A549 (cell line): ENCODE measurements at regions of chr2 and their contacts with region 1.

Region 1: GRCh38 chr2:126971481-126972278 is 73.0 kb downstream of the TEX51 start:
- DNase-seq: peak; percentile 61 to 69
- ATAC-seq: peak; percentile 81 to 94
- H3K4me3 ChIP-seq: peak overlapping the region; percentile 49
- H3K27ac ChIP-seq: peak overlapping the region; percentile 63 to 78; a peak in 5 of 6 replicates
- H3K4me1 ChIP-seq: 0 out of 3 replicates have a peak, but pooled peaks cover 3% of the 10 kb centered on the region
- CTCF ChIP-seq: peak; percentile 75
- EP300 ChIP-seq: no peak
- POLR2A ChIP-seq: no peak
- RAD21 ChIP-seq: peak; percentile 87 to 89

Region 2: GRCh38 chr2:126986631-126987187 is 15.0 kb after region 1 on chr2:
- CTCF ChIA-PET with region 1: interaction called, 16 read pairs
- POLR2A ChIA-PET with region 1: no interaction called
- DNase-seq: no peak
- ATAC-seq: no peak
- H3K4me3 ChIP-seq: no peak overlapping the region
- H3K27ac ChIP-seq: no peak overlapping the region
- H3K4me1 ChIP-seq: no peaks in the 10 kb centered on the region
- CTCF ChIP-seq: no peak
- EP300 ChIP-seq: no peak
- POLR2A ChIP-seq: no peak
- RAD21 ChIP-seq: no peak

Region 3: DNA sequence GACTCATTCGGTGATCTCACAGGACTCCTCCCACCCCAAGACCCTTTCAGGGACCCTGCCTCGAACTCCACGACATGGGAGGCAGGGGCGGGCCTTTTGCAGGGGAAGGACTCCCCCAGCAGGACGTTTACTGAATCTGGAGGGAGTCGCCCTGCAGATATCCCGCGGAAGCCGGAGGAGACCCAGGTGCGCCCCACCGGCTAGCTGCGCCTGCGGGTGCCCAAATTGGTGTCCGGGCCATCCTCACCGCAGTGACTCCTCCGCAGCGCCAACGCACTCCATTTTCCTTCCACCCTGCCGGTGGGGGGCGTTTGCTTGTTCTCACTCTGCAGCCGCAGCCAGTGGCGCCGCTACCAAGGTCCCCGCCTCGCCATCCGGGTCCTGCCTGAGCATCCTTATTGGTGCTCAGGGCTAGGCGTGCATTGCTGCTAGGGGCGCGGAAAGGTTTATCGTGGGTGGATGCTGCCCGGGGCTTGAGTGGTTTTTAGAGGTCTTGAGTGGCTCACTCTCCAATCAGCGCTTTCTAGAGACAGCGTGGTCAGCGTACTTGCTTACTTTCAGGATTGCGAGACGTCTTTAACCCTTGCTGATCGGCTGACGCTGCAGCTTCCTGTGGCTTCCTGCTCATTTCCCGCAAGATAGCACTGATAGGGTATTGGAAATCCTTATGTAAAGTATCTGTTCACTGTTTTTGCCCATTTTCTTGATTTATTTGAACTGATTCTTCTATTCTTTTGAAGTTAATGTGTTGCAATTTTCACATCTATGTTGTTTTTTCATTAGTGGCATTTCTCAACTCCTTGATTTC is 53.9 kb after region 1 on chr2:
- CTCF ChIA-PET with region 1: interaction called, 13 read pairs
- POLR2A ChIA-PET with region 1: no interaction called
- DNase-seq: peak; percentile 82 to 90
- ATAC-seq: peak; percentile 94 to 98
- H3K4me3 ChIP-seq: peak overlapping the region; percentile 45
- H3K27ac ChIP-seq: peak overlapping the region; percentile 61 to 79
- H3K4me1 ChIP-seq: peaks cover 4% of the 10 kb centered on the region; the same call in 1 of the 3 replicates
- CTCF ChIP-seq: peak; percentile 50
- EP300 ChIP-seq: no peak
- POLR2A ChIP-seq: peak; percentile 51
- RAD21 ChIP-seq: peak; percentile 25 to 36; a peak in 4 of 5 replicates